H1 (cell line): ENCODE measurements at regions of chr5 and their contacts with region 1.

Region 1: DNA sequence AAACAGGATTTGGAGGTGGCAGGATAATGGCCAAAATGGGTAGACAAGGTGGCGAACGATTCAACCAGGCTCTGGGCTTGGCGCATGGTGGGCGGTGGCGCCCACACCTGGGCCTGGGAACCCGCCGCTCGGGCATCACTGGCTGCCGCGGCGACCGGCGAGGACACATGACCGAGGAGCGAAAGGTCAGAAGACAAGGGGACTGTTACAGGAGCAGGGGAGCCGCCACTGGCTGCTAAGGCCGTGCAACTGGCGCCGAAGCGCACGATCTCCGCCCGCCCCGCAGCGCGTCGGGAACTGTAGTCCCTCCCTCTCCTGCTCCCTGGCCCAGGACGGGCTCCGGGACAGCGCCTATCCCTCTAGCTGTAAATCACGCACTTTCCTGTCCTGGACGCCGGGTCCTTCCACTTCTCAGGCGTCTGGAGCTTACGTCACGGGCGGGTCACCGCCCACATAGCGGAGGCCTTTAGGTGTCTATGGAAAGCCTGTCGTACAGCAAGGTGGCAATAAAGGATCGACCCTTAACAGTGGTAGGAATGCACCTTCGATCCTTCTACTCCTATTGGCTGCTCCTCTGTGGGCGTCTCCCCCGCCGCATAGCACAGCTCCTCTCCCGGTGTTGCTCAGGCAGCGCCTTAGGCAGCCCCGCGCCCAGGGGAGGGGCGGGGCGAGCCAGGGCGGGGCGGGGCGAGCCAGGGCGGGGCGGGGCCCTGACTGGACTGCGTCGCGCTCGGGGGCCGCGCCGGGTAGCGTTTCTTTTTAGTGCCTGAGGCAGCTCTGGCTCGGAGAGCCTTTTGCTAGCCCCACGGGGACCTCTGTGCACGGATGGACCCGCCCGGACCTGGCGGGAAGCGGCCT is at the start of gene ICE1:
- DNase-seq: peak; percentile 95 to 99
- H3K4me3 ChIP-seq: peak within 1 kb of the TSS; percentile 57 to 98 (median 90)
- H3K27ac ChIP-seq: peak within 1 kb of the TSS; percentile 95; the same call in 1 of the 2 replicates
- H3K4me1 ChIP-seq: peaks cover 5 to 15% (median 10%) of the 10 kb centered on the region in 4 experiments
- H3K27me3 ChIP-seq: no peaks in the 10 kb centered on the region
- CTCF ChIP-seq: 0 out of 4 replicates have a peak, but pooled peaks of 1 of the 3 experiments have one; percentile 12
- EP300 ChIP-seq: no peak
- POLR2A ChIP-seq: peak; percentile 53 to 78
- RAD21 ChIP-seq: peak in 1 of 2 experiments; percentile 8; a peak in 1 of 4 replicates
- total RNA-seq, gene ICE1: 52.2 and 53.9 TPM in 2 replicates

Region 2: GRCh38 chr5:4868109-4868735 is 554.0 kb before region 1 on chr5:
- CTCF ChIA-PET with region 1: interaction called, 22 read pairs
- POLR2A ChIA-PET with region 1: no interaction called
- DNase-seq: peak in 1 of 2 experiments; percentile 88
- H3K4me3 ChIP-seq: no peak overlapping the region
- H3K27ac ChIP-seq: no peak overlapping the region
- H3K4me1 ChIP-seq: no peaks in the 10 kb centered on the region
- H3K27me3 ChIP-seq: no peaks in the 10 kb centered on the region
- CTCF ChIP-seq: peak; percentile 71 to 82 (median 78)
- EP300 ChIP-seq: no peak
- POLR2A ChIP-seq: no peak
- RAD21 ChIP-seq: peak; percentile 81 to 82

Region 3: DNA sequence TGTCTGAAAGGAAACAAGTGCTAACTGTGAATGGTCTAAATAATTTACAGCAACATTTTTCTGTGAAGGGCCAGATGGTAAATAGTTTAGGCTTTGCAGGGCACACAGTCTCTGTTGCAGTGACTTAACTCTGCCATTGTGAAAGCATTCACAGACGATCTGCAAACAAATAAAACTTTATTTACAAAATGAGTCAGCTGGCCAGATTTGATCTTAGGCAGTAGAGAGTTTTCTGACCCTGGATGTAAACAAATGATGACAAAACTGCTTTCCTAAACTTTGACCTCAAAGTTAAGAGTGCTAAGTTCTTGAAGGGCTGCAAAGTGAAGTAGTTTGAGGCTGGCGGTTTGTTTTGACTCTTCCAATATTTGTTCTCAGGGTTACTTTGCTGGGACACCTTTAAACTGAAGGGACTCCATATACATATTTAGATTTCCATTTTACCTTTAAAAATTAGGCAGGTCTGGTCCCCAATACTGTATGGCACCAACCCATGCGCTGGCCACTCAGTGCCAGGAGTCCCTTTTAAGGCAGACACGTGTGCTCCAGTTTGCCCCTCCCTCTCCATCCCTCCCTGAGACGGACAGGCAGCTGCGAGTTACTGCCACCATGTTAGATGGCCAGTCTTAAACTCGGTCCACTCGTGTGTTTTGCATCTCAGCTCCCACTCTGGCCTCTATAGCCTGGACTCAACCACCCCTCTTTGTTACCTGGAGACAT is 286.1 kb before region 1 on chr5:
- CTCF ChIA-PET with region 1: interaction called, 19 read pairs
- POLR2A ChIA-PET with region 1: interaction called, 7 read pairs
- DNase-seq: no peak
- H3K4me3 ChIP-seq: no peak overlapping the region
- H3K27ac ChIP-seq: no peak overlapping the region
- H3K4me1 ChIP-seq: peaks cover under 1 to 12% (median 5%) of the 10 kb centered on the region in 4 experiments; a peak in 6 of 7 replicates
- H3K27me3 ChIP-seq: peaks cover 0 to 18% (median 7%) of the 10 kb centered on the region in 4 experiments; a peak in 5 of 7 replicates
- CTCF ChIP-seq: no peak
- EP300 ChIP-seq: no peak
- POLR2A ChIP-seq: no peak
- RAD21 ChIP-seq: no peak

Region 4: GRCh38 chr5:5291357-5291756 is 130.8 kb before region 1 on chr5:
- CTCF ChIA-PET with region 1: interaction called, 33 read pairs
- POLR2A ChIA-PET with region 1: no interaction called
- DNase-seq: no peak
- H3K4me3 ChIP-seq: no peak overlapping the region
- H3K27ac ChIP-seq: no peak overlapping the region
- H3K4me1 ChIP-seq: peaks cover 0 to 2% (median 0%) of the 10 kb centered on the region in 4 experiments; a peak in 1 of 7 replicates
- H3K27me3 ChIP-seq: no peaks in the 10 kb centered on the region
- CTCF ChIP-seq: no peak
- EP300 ChIP-seq: no peak
- POLR2A ChIP-seq: no peak
- RAD21 ChIP-seq: no peak

Region 5: DNA sequence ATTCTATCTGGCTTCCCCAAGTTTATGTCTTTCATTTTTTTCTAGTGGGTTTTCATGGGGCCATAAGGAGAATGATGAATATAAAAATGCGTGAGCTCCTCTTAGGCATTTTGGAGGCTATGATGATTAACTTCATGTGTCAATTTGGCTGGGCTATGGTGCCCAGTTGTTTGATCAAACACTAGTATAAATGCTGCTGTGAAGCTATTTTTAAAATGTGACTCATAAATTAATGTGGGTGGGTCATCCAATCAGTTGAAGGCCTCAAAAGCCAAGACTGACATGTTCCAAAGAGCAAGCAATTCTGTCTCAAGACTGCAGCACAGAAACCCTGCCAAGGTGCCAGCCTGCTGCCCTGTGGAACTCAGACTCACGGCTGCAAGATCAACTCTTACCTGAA is 24.1 kb before region 1 on chr5:
- CTCF ChIA-PET with region 1: interaction called, 13 read pairs
- POLR2A ChIA-PET with region 1: interaction called, 7 read pairs
- DNase-seq: no peak
- H3K4me3 ChIP-seq: no peak overlapping the region
- H3K27ac ChIP-seq: no peak overlapping the region
- H3K4me1 ChIP-seq: no peaks in the 10 kb centered on the region
- H3K27me3 ChIP-seq: no peaks in the 10 kb centered on the region
- CTCF ChIP-seq: no peak
- EP300 ChIP-seq: no peak
- POLR2A ChIP-seq: no peak
- RAD21 ChIP-seq: no peak

Region 6: GRCh38 chr5:5523066-5523505 is 100.9 kb after region 1 on chr5:
- CTCF ChIA-PET with region 1: no interaction called
- POLR2A ChIA-PET with region 1: no interaction called
- DNase-seq: no peak
- H3K4me3 ChIP-seq: no peak overlapping the region
- H3K27ac ChIP-seq: no peak overlapping the region
- H3K4me1 ChIP-seq: peaks cover 0 to 7% (median 2%) of the 10 kb centered on the region in 4 experiments; a peak in 4 of 7 replicates
- H3K27me3 ChIP-seq: no peaks in the 10 kb centered on the region
- CTCF ChIP-seq: no peak
- EP300 ChIP-seq: no peak
- POLR2A ChIP-seq: no peak
- RAD21 ChIP-seq: no peak